ENCODE measurements at regions of chr12 and their contacts with region 1.

Region 1: DNA sequence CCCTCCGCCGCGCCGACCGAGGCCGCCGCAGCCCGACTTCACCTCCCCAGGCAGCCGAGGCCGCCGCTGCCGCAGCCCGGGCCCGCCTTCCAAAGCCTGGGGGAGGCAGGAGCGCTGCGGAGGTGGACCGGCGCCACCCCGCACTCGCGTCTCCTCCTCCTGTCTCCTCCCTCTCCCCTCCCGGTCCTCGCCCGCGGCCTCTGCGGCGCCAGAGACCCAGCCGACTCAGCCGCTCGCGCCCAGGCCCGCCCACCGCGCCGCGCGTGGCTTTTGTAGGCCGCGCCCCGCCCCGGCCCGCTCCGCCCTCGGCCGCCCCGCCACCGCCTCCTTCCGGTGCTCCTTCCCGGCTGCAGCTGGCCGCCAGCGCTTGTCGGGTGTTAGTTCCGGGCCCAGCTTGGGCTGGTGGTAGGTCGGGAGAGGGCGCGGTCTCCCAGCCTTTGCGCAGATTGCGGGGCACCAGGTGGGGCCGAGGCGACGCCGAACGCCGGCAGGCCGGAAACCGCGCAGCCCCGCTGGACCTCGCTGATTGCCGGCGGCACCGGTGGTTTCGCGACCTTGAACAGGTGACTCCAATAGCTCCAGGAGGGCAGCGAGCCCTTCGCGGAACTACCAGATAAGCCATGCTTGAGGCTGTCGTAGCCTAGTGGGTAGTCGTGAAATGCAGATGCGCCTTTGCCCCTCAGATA is at the start of gene CAPRIN2:
- DNase-seq: peak; percentile 98 to 99 (median 98)
- ATAC-seq: peak; percentile 98
- H3K4me3 ChIP-seq: peak within 1 kb of the TSS; percentile 54
- H3K4me1 ChIP-seq: peaks cover 9% of the 10 kb centered on the region
- CTCF ChIP-seq: peak; percentile 59
- total RNA-seq, gene CAPRIN2: 7.3 to 21.4 (median 15.2) TPM

Region 2: DNA sequence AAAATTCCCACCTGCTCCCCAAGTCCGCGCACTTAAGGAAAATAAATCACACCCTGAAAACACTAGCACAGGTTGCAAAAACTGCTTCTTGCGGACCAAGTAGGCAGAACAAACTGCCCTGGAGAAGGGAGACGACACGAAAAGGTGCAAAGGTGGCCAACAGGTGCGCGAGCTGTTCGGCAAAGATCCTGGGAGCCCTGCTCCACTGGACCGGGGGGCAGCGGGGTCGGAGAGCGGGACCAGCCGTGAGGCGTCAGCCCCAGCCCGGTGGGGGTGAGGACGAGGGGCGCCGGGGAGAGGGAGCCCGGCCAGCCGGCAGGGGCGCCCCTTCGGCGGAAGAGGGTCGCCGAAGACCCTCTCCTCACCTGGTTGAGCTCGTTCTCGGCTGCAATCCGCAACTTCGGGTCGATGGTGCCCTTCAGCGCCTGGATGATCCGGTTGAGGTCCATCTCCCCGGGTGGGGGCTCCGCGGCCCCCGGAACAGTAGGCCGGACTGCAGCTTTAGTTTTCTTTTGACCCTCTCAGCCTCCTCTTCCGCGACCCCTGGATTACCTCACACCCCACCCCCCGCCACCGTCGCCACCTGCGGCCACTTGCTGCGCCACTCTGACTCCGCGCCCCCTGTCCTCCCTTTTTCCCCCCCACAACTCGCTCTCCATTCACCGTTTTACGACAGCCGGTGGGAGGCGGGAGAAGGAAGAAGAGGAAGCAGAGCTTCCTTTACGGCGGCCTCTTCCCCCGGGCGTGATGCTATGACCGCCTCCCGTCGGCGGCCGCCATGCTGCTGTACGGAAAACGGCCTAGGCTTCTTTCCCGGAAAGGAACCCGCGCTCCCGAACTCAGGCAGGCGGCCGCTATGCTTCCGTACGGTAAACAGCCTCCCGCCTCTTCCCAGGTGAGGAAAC is 59.4 kb before region 1 on chr12 and contains the start of gene IPO8:
- intact Hi-C with region 1: loop called in 1 of 2 experiments (anchors 10 kb)
- DNase-seq: peak; percentile 95 to 96 (median 96)
- ATAC-seq: peak; percentile 99
- H3K4me3 ChIP-seq: peak within 1 kb of the TSS; percentile 86
- H3K4me1 ChIP-seq: no peaks in the 10 kb centered on the region
- CTCF ChIP-seq: no peak
- total RNA-seq, gene IPO8: 62.2 to 72.3 (median 63.7) TPM

Measured in mucosa of descending colon (tissue), 3 donors.